HCT116 (cell line): ENCODE measurements at regions of chr16 and their contacts with region 1.

Region 1: DNA sequence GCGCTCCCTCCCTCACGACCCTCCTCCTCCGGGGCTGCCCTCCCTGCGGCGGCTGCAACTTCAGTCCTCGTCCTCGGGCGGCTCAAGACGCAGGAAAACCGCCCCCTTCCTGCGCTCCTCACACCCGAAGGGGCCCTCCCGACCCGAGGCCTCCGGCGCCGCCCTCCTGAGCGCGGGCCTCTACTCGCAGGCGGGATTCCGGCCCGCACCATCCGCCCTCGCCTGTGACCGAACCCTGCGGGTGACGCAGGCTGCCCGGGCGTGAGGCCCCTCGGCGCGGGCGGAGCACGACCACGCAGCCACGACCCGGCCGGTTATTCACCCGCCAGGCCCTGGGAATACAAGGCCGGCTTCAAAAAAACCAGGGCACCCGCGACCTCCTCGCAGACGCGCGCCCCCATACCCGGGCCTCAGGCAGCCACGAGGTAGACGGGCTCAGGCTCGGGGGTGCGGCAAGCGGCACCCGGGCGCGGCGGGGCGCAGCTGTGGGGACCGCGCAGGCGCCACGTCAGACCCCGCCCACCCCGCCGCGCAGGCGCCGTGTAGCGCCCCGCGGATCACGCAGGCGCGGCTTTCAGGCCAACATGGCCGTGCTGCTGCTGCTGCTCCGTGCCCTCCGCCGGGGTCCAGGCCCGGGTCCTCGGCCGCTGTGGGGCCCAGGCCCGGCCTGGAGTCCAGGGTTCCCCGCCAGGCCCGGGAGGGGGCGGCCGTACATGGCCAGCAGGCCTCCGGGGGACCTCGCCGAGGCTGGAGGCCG is at the start of gene SPG7:
- DNase-seq: peak; percentile 66
- ATAC-seq: peak; percentile 79
- H3K4me3 ChIP-seq: peak within 1 kb of the TSS; percentile 76 to 94
- H3K27ac ChIP-seq: peak within 1 kb of the TSS; percentile 98
- H3K4me1 ChIP-seq: peaks cover 38 to 56% of the 10 kb centered on the region in 2 experiments
- H3K27me3 ChIP-seq: no peaks in the 10 kb centered on the region
- CTCF ChIP-seq: no peak
- POLR2A ChIP-seq: peak; percentile 91
- RAD21 ChIP-seq: no peak
- total RNA-seq, gene SPG7: 116 TPM

Region 2: DNA sequence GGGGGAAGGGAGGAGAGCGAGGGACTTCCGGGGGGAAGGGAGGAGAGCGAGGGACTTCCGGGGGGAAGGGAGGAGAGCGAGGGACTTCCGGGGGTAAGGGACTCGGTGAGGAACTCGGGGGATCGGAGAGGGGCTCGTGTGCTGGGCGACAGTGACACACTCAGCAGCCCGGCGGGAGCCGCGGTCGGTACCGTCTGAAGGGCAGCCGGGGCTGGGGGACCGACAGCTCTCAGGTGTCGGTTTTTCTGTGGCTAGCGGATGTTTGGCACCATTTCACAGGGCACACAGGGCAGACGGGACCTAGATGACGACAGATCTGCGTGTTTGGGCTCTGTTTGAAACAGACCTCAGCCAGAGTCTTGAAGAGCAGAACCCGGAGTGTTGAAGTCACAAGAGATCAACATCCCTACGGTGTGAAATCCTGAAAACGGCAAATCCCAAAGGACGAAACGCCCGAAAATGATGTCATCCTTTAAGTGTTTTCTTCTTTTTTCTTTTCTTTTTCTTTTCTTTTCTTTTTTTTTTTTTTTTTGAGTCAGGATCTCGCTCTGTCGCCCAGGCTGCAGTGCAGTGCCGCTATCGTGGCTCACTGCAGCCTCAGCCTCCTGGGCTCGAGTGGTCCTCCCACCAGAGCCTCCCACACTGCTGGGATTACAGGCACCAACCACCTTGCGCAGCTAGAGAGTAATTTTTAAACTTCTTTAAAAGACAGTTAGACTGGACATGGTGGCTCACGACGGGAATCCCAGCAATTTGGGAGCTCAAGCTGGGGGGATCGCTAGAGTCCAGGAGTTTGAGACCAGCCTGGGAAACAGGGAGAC is 266.6 kb before region 1 on chr16:
- CTCF ChIA-PET with region 1: no interaction called
- POLR2A ChIA-PET with region 1: interaction called, 4 read pairs
- RAD21 ChIA-PET with region 1: no interaction called
- intact Hi-C with region 1: loop called (anchors 5 kb)
- DNase-seq: peak; percentile 79
- ATAC-seq: peak; percentile 75
- H3K4me3 ChIP-seq: peak overlapping the region; percentile 88 to 91
- H3K27ac ChIP-seq: peak overlapping the region; percentile 83
- H3K4me1 ChIP-seq: peaks cover 1 to 10% of the 10 kb centered on the region in 2 experiments; a peak in 3 of 4 replicates
- H3K27me3 ChIP-seq: no peaks in the 10 kb centered on the region
- CTCF ChIP-seq: no peak
- POLR2A ChIP-seq: peak; percentile 93
- RAD21 ChIP-seq: no peak

Region 3: GRCh38 chr16:89325861-89326471 is 182.0 kb before region 1 on chr16:
- CTCF ChIA-PET with region 1: no interaction called
- POLR2A ChIA-PET with region 1: interaction called, 3 read pairs
- RAD21 ChIA-PET with region 1: interaction called in 1 of 2 experiments, 3 read pairs
- intact Hi-C with region 1: loop called (anchors 2 kb)
- DNase-seq: no peak
- ATAC-seq: no peak
- H3K4me3 ChIP-seq: peak overlapping the region; percentile 5 to 31; a peak in 2 of 4 replicates
- H3K27ac ChIP-seq: peak overlapping the region; percentile 80
- H3K4me1 ChIP-seq: peaks cover 96 to 100% of the 10 kb centered on the region in 2 experiments
- H3K27me3 ChIP-seq: no peaks in the 10 kb centered on the region
- CTCF ChIP-seq: no peak
- POLR2A ChIP-seq: no peak
- RAD21 ChIP-seq: no peak

Region 4: DNA sequence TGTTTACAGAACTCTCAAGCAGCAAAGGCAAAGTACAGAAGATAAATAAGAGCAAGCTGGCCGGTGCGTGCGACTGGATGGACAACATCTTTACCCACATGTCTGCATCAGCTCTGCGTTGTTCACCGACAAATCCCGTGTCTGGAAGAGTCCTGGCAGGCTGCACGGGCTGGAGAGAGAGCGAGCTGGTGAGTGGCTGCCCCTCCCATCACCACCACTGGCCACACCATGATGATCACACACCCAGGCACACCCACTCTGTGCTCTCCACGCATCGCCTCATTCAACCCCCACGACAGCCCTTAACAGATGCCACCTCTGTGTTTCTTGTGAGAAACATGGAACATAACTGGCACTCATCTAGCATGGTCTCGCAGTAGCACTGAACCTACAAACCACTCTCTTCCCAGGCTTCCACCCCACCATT is 76.8 kb before region 1 on chr16:
- CTCF ChIA-PET with region 1: no interaction called
- POLR2A ChIA-PET with region 1: no interaction called
- RAD21 ChIA-PET with region 1: no interaction called
- intact Hi-C with region 1: no loop called
- DNase-seq: no peak
- ATAC-seq: no peak
- H3K4me3 ChIP-seq: no peak overlapping the region
- H3K27ac ChIP-seq: no peak overlapping the region
- H3K4me1 ChIP-seq: peaks cover 5 to 18% of the 10 kb centered on the region in 2 experiments; a peak in 2 of 4 replicates
- H3K27me3 ChIP-seq: no peaks in the 10 kb centered on the region
- CTCF ChIP-seq: no peak
- POLR2A ChIP-seq: no peak
- RAD21 ChIP-seq: no peak

Region 5: DNA sequence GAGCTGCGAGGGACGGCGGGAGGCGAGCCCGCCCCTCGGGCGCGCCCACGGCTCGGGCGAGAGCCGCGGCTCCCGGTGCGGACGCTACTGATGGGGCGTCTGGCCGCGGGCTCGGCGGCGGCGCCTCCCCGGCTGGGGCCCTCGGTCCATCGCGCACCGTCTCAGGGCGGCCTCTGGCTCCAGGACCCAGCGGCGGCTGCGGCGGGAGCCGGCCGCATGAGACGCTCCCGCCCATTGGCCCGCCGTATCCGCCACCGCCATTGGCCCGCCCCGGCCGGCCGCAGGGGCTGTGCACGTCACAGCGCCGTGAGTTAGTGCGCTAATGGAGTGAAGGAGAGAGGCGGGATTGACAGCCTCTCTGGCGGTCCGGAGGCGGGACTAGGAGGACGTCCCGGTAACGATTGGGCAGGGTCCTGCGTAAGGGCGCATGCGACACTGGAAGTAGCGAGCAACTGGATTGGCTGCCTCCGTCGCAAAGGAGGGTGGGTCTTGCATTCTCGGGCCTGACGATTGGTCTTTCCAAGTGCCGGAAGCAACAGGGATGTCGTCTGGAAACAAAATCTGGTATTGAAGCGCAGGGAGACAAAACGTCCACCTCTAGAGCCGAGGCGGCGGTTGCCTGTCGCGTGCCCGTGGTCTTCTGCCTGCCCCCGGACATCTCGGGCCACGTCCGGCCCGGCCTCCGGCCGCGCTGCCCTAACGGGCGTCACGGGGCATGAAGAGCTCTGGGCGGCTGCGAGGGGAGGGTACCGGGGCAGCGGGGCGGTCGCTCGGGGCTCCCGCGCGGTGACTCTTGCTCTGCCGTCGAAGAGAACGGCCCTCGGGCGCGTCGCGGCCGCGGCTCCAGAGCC is 17.4 kb before region 1 on chr16 and contains the start of gene ANKRD11:
- CTCF ChIA-PET with region 1: no interaction called
- POLR2A ChIA-PET with region 1: interaction called, 5 read pairs
- RAD21 ChIA-PET with region 1: no interaction called
- intact Hi-C with region 1: loop called (anchors 2 kb)
- DNase-seq: peak; percentile 100
- ATAC-seq: peak; percentile 96
- H3K4me3 ChIP-seq: peak within 1 kb of the TSS; percentile 59 to 74
- H3K27ac ChIP-seq: peak within 1 kb of the TSS; percentile 95
- H3K4me1 ChIP-seq: peaks cover 17 to 44% of the 10 kb centered on the region in 2 experiments
- H3K27me3 ChIP-seq: no peaks in the 10 kb centered on the region
- CTCF ChIP-seq: no peak
- POLR2A ChIP-seq: peak; percentile 49
- RAD21 ChIP-seq: no peak
- total RNA-seq, gene ANKRD11: 266 TPM